Cardiac septum (tissue), 1 donor: ENCODE measurements at regions of chr1 and their contacts with region 1.

Region 1: GRCh38 chr1:153922972-153923925 is at the start of gene GATAD2B:
- DNase-seq: peak; percentile 100
- total RNA-seq, gene GATAD2B: 45.7 TPM

Region 2: GRCh38 chr1:153827168-153827964 is 95.9 kb before region 1 on chr1:
- intact Hi-C with region 1: loop called (anchors 5 kb)
- DNase-seq: no peak

Region 3: GRCh38 chr1:153880962-153881361 is 42.3 kb before region 1 on chr1:
- intact Hi-C with region 1: loop called (anchors 2 kb)
- DNase-seq: peak; percentile 92